Ascending aorta (tissue), 2 donors: ENCODE measurements at regions of chr16 and their contacts with region 1.

Region 1: GRCh38 chr16:87387942-87388817 is 4.0 kb upstream of the MAP1LC3B start:
- DNase-seq: peak; percentile 91 to 98
- H3K4me3 ChIP-seq: peak overlapping the region; percentile 13 to 27
- H3K27ac ChIP-seq: peak overlapping the region; percentile 85 to 89
- H3K4me1 ChIP-seq: peaks cover 4 to 26% of the 10 kb centered on the region in 2 donors
- H3K27me3 ChIP-seq: no peaks in the 10 kb centered on the region
- CTCF ChIP-seq: no peak

Region 2: GRCh38 chr16:86363057-86363490 is 1025.1 kb before region 1 on chr16:
- intact Hi-C with region 1: no loop called
- DNase-seq: no peak
- H3K4me3 ChIP-seq: no peak overlapping the region
- H3K27ac ChIP-seq: no peak overlapping the region
- H3K4me1 ChIP-seq: peaks cover 0 to 4% of the 10 kb centered on the region in 2 donors
- H3K27me3 ChIP-seq: no peaks in the 10 kb centered on the region
- CTCF ChIP-seq: no peak

Region 3: GRCh38 chr16:86554917-86555703 is 833.1 kb before region 1 on chr16 and contains the start of gene MTHFSD:
- intact Hi-C with region 1: loop called (anchors 2 kb)
- DNase-seq: peak; percentile 65 to 96
- H3K4me3 ChIP-seq: peak within 1 kb of the TSS; percentile 77 to 89
- H3K27ac ChIP-seq: peak within 1 kb of the TSS; percentile 88 to 89
- H3K4me1 ChIP-seq: peaks cover 3 to 13% of the 10 kb centered on the region in 2 donors
- H3K27me3 ChIP-seq: no peaks in the 10 kb centered on the region
- CTCF ChIP-seq: no peak
- total RNA-seq, gene MTHFSD: 44.1 TPM

Region 4: DNA sequence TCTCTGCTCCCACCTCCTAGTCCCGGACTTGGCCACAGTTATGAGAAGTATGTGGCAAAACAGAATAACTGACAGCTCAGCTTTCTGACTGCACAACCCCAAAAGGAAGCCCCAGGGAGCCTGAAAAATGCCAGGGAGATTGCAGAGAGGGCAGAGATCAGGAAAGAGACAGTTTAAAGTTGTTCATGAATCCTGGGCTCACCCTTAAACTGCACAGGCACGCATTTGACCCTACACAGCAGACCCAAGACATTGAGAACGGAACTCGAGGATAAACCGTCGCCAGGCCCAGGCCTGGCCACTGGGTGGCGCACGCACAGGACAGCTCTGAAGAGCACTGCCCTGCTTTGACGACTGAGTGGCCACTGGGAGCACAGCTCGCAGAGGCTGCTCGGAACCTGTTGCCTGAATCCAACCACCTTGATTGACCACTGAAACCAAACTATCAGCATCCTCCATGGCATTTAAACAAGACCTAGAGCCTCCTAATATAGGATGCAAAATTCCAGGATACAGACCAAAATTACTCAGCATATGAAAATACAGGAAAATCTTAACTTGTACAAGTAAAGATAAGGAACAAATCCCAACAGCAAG is 185.0 kb before region 1 on chr16:
- intact Hi-C with region 1: loop called (anchors 10 kb)
- DNase-seq: peak in 1 of 2 donors; percentile 80
- H3K4me3 ChIP-seq: no peak overlapping the region
- H3K27ac ChIP-seq: peak overlapping the region; percentile 52 to 69
- H3K4me1 ChIP-seq: peaks cover 5 to 34% of the 10 kb centered on the region in 2 donors
- H3K27me3 ChIP-seq: no peaks in the 10 kb centered on the region
- CTCF ChIP-seq: peak; percentile 71 to 91 (median 84)

Region 5: DNA sequence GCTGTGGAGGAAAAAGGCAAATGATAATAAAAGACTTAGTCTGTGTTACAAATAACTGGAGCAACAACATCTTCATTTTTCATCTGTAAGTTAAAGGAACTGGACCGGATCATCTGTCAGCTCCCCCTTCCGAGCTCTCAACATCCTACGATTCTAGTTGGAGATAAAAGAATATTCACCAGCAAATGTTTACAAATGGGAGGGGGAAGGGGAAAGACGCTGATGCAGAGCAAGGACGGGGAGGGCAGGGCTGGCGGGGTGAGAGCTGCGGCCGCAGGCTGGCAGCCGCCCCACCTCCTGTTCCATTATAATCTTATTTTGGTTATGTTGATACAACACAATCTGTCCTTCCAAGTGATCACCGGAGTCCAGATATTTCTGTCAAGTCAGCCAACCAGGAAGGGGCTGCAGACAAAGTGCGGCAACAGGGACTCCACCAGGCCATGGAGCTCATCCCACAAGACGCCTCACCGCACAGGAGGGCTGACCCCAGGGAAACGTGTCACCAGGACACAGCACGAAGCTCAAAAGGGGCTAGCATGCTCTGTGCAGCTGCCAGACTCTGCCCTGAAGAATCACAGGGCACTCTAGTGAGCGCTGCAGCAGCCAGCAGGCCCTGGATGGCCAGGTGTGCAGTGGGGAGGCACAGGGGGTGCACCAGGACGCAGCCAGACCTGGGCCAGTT is 24.3 kb before region 1 on chr16:
- intact Hi-C with region 1: no loop called
- DNase-seq: no peak
- H3K4me3 ChIP-seq: no peak overlapping the region
- H3K27ac ChIP-seq: no peak overlapping the region
- H3K4me1 ChIP-seq: peaks cover 0 to 5% of the 10 kb centered on the region in 2 donors
- H3K27me3 ChIP-seq: no peaks in the 10 kb centered on the region
- CTCF ChIP-seq: no peak

Region 6: DNA sequence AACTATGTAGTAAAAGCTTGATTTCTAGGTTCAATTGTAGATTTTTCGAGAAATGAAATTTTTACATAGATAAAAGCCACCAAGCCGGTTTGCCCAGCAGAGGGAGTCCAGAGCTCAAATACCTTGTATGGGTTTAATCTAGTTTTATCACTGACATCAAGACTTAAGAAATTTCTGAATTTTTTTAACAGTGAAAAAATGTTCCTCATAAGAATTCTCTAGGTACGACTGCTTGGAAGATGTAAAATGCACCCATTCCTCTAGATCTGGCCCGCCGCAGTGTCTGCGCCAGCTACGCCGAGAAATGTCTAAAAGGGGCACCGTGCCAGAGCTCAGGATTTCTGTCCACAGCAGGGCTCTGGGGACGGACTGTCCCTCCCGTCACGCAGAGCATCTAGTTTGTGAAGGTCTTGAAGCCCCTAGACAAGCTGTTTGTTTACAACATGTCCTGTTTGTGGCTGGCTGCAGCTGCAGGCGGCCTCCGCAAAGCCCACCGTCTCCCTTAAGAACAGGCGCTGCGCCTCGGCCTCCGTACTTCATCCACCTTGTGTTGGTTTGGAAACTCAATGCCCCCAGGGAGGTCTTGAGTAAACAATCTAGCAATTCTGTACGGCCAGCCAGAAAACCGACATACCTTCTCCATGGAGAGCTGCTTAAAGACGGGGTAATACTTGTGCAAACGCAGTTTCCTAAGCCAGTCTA is 28.8 kb after region 1 on chr16:
- intact Hi-C with region 1: no loop called
- DNase-seq: no peak
- H3K4me3 ChIP-seq: no peak overlapping the region
- H3K27ac ChIP-seq: no peak overlapping the region
- H3K4me1 ChIP-seq: no peaks in the 10 kb centered on the region
- H3K27me3 ChIP-seq: no peaks in the 10 kb centered on the region
- CTCF ChIP-seq: peak; percentile 32 to 70 (median 57)

Region 7: DNA sequence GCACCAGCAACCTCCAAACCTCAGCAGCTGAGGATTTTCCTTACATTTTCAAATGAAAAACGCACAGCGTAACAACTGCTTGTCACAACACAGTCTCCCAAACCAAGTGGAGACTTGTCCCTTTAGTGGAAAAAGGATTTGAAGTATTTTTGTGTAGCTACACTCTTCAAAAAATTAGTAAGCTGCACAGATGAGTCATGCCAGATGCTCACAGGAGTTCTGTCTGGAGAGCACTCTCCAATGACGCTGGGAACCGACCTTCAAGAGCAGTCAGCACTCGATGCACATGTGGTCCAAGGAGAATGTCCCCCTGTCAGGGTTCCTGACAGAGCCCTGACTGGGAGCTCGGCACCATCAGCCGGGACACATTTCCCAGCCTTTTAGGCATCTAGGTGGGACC is 43.7 kb after region 1 on chr16:
- intact Hi-C with region 1: no loop called
- DNase-seq: no peak
- H3K4me3 ChIP-seq: no peak overlapping the region
- H3K27ac ChIP-seq: no peak overlapping the region
- H3K4me1 ChIP-seq: peaks cover 6 to 12% of the 10 kb centered on the region in 2 donors
- H3K27me3 ChIP-seq: no peaks in the 10 kb centered on the region
- CTCF ChIP-seq: no peak

Region 8: GRCh38 chr16:87464691-87465300 is 76.6 kb after region 1 on chr16:
- intact Hi-C with region 1: loop called (anchors 2 kb)
- DNase-seq: peak; percentile 85 to 95
- H3K4me3 ChIP-seq: peak overlapping the region; percentile 3 to 55
- H3K27ac ChIP-seq: peak overlapping the region; percentile 74 to 90
- H3K4me1 ChIP-seq: peaks cover 23 to 43% of the 10 kb centered on the region in 2 donors
- H3K27me3 ChIP-seq: no peaks in the 10 kb centered on the region
- CTCF ChIP-seq: no peak

Region 9: DNA sequence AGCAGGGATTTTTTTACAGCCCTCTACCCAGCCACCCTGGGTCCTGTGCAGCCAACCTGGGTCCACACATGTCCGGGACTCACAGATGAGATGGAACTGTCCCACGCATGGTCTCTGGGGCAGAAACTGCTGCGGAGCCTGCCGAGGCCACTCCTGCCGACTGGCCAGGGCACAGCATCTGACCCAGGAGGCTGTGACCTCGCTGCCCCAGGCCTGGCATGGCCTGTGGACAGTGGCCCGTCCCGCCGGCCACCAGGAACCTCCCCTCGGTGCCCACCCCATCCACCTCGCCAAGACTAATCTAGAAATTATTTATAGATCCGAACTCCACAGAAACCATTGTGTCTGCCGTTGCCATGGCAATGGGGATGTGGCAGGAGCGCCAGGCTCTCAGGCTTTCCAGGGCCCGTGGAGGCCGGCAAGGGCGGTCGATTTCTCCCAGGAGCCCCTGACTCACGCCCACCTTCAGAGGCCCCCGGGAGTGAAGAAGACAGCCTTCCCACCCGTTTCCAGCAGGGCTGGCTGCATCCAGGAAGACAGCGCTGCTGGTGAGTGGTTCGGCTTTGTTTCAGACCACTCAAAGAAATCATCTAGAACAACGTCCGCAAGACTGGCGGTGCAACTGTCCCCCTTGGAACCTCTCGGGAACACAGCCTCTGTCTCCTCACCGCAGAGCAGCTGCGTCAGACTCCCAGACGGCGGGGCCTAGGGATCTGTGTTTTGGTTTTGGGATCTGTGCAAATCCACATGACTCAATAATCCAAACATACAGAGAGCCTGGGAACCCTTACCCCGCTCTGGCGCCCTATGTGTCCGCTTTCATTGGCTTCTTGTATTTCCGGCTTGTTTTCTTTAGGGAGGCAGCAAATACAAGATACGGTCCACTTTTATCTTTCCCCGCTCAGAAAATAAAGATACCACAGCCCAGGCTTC is 153.0 kb after region 1 on chr16:
- intact Hi-C with region 1: loop called (anchors 1 kb)
- DNase-seq: peak; percentile 29 to 92
- H3K4me3 ChIP-seq: peak overlapping the region; percentile 48 to 62
- H3K27ac ChIP-seq: peak overlapping the region; percentile 96 to 98
- H3K4me1 ChIP-seq: peaks cover 6 to 42% of the 10 kb centered on the region in 2 donors
- H3K27me3 ChIP-seq: no peaks in the 10 kb centered on the region
- CTCF ChIP-seq: peak in 1 of 3 experiments; percentile 6